Naive thymus-derived CD4-positive, alpha-beta T cell (primary cell): ENCODE measurements at regions of chr1 and their contacts with region 1.

Region 1: GRCh38 chr1:154404984-154405761 is at the start of gene IL6R:
- DNase-seq: peak; percentile 63 to 83 (median 77)
- ATAC-seq: peak; percentile 70
- H3K4me3 ChIP-seq: peak within 1 kb of the TSS; percentile 72
- H3K4me3 Mint-ChIP-seq: peak within 1 kb of the TSS; percentile 88 to 98 (median 96)
- H3K27ac ChIP-seq: peak within 1 kb of the TSS; percentile 75
- H3K27ac Mint-ChIP-seq: peak within 1 kb of the TSS; percentile 77 to 99 (median 95)
- H3K4me1 ChIP-seq: peaks cover 51 to 68% of the 10 kb centered on the region in 2 donors
- H3K4me1 Mint-ChIP-seq: peaks cover 50 to 75% (median 68%) of the 10 kb centered on the region in 7 donors
- H3K27me3 ChIP-seq: no peaks in the 10 kb centered on the region
- H3K27me3 Mint-ChIP-seq: peaks cover 0 to 4% (median 0%) of the 10 kb centered on the region in 5 donors
- total RNA-seq, gene IL6R: 5.2 to 91.6 (median 85.6) TPM

Region 2: DNA sequence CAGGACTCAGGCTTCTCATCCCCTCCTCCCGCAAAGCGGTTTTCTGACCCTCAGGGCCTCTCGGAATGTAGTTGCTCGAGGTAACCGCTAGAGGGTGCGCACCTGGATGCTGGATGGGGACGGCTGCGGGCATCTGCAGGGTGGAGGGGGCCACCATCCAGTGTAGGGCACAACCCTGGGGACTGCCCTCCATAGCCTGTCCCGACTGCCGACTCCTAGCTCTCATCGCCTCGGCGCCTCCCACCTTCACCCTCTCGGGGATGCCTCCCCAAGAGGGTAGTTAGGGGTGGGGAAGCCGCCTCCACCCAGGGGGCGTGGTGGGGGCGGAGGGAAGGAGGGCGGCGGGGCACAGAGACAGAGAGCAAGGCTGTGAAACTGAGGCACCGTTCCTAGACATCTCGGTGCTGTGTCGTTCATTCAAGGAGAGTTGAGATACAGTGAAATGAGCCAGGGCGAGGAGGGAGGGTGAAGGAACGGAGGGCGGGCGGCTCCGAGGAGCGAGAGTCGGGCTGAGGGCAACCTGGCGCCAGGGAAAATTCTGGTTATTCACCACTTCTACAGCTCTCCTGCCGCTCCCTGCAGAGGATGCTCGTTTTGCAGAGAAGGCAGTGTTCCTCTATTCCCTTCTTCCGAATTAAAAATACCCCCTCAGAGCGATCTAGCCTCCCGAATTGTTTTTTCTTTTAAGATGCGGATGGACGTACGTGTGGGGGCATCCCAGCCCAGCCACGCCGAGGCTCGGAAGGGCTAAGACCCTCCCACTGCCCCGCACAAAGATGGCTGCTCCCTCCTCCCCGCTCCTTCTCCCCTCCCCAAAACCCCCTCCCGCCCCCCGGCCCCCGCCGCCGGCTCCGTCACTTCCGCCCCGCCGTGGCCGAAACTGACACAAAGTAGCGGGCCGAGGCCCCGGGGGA is 80.2 kb before region 1 on chr1 and contains the start of gene ATP8B2:
- CTCF ChIA-PET with region 1: interaction called, 8 read pairs
- POLR2A ChIA-PET with region 1: interaction called, 6 read pairs
- intact Hi-C with region 1: loop called in 1 of 2 experiments (anchors 1 kb)
- DNase-seq: peak; percentile 60 to 82 (median 77)
- ATAC-seq: peak; percentile 80
- H3K4me3 ChIP-seq: peak within 1 kb of the TSS; percentile 79
- H3K4me3 Mint-ChIP-seq: peak within 1 kb of the TSS; percentile 92 to 98 (median 96)
- H3K27ac ChIP-seq: peak within 1 kb of the TSS; percentile 94
- H3K27ac Mint-ChIP-seq: peak within 1 kb of the TSS; percentile 80 to 95 (median 92)
- H3K4me1 ChIP-seq: peaks cover 24 to 36% of the 10 kb centered on the region in 2 donors
- H3K4me1 Mint-ChIP-seq: peaks cover 27 to 42% (median 38%) of the 10 kb centered on the region in 7 donors
- H3K27me3 ChIP-seq: no peaks in the 10 kb centered on the region
- H3K27me3 Mint-ChIP-seq: peaks cover 0 to 31% (median 0%) of the 10 kb centered on the region in 5 donors
- total RNA-seq, gene ATP8B2: 105 to 130 (median 117) TPM

Region 3: DNA sequence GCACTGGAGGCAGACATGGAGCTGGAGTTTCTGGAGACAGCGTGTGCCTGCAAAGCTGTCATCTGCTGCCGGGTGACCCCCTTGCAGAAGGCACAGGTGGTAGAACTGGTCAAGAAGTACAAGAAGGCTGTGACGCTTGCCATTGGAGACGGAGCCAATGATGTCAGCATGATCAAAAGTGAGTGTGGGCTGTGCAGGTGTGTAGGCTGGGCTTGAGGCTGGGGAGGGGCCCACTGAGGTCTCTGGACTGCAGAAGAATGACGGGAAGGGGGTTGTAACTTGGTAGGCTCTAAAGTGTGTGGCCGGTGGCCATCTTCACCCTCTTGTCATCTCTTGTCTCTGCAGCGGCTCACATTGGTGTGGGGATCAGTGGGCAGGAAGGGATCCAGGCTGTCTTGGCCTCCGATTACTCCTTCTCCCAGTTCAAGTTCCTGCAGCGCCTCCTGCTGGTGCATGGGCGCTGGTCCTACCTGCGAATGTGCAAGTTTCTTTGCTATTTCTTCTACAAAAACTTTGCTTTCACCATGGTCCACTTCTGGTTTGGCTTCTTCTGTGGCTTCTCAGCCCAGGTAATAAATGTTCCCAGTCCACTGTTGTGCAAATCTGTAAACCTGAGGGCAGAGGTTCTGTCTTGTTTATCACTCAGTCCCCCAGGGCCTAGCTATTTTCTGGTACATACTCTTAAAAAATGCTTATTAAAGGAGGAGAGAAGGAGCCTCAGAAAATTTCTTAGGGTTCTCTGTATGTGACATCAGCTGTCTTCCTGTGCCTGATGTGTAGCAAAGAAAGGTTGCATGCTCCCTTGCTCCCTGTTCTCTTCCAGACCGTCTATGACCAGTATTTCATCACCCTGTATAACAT is 60.0 kb before region 1 on chr1:
- CTCF ChIA-PET with region 1: interaction called, 18 read pairs
- POLR2A ChIA-PET with region 1: interaction called, 26 read pairs
- intact Hi-C with region 1: loop called in 1 of 2 experiments (anchors 5 kb)
- DNase-seq: peak; percentile 56 to 79 (median 71)
- ATAC-seq: peak; percentile 55
- H3K4me3 ChIP-seq: peak overlapping the region; percentile 83
- H3K4me3 Mint-ChIP-seq: peak overlapping the region; percentile 79 to 98 (median 92)
- H3K27ac ChIP-seq: peak overlapping the region; percentile 61
- H3K27ac Mint-ChIP-seq: peak overlapping the region; percentile 31 to 100 (median 96)
- H3K4me1 ChIP-seq: peaks cover 60 to 71% of the 10 kb centered on the region in 2 donors
- H3K4me1 Mint-ChIP-seq: peaks cover 64 to 96% (median 73%) of the 10 kb centered on the region in 7 donors
- H3K27me3 ChIP-seq: no peaks in the 10 kb centered on the region
- H3K27me3 Mint-ChIP-seq: no peaks in the 10 kb centered on the region

Region 4: GRCh38 chr1:154386643-154387352 is 18.4 kb before region 1 on chr1:
- CTCF ChIA-PET with region 1: interaction called, 18 read pairs
- POLR2A ChIA-PET with region 1: interaction called, 43 read pairs
- intact Hi-C with region 1: loop called (anchors 1 to 2 kb)
- DNase-seq: peak; percentile 21 to 81 (median 66)
- ATAC-seq: peak; percentile 95
- H3K4me3 ChIP-seq: peak overlapping the region; percentile 57
- H3K4me3 Mint-ChIP-seq: peak overlapping the region; percentile 65 to 92 (median 83)
- H3K27ac ChIP-seq: peak overlapping the region; percentile 82
- H3K27ac Mint-ChIP-seq: peak overlapping the region; percentile 92 to 99 (median 97)
- H3K4me1 ChIP-seq: peaks cover 26 to 38% of the 10 kb centered on the region in 2 donors
- H3K4me1 Mint-ChIP-seq: peaks cover 28 to 63% (median 43%) of the 10 kb centered on the region in 7 donors
- H3K27me3 ChIP-seq: no peaks in the 10 kb centered on the region
- H3K27me3 Mint-ChIP-seq: no peaks in the 10 kb centered on the region

Region 5: GRCh38 chr1:154442006-154442740 is 37.0 kb after region 1 on chr1:
- CTCF ChIA-PET with region 1: interaction called, 29 read pairs
- POLR2A ChIA-PET with region 1: interaction called, 71 read pairs
- intact Hi-C with region 1: loop called (anchors 1 to 2 kb)
- DNase-seq: no peak
- ATAC-seq: no peak
- H3K4me3 ChIP-seq: peak overlapping the region; percentile 36
- H3K4me3 Mint-ChIP-seq: peak overlapping the region in 9 of 10 donors; percentile 69 to 87 (median 76)
- H3K27ac ChIP-seq: peak overlapping the region; percentile 78
- H3K27ac Mint-ChIP-seq: peak overlapping the region in 8 of 9 donors; percentile 91 to 99 (median 96)
- H3K4me1 ChIP-seq: peaks cover 11 to 69% of the 10 kb centered on the region in 2 donors
- H3K4me1 Mint-ChIP-seq: peaks cover 55 to 82% (median 73%) of the 10 kb centered on the region in 7 donors
- H3K27me3 ChIP-seq: no peaks in the 10 kb centered on the region
- H3K27me3 Mint-ChIP-seq: no peaks in the 10 kb centered on the region

Region 6: GRCh38 chr1:154546264-154547063 is 141.3 kb after region 1 on chr1:
- CTCF ChIA-PET with region 1: interaction called, 4 read pairs
- POLR2A ChIA-PET with region 1: interaction called, 3 read pairs
- intact Hi-C with region 1: loop called in 1 of 2 experiments (anchors 2 kb)
- DNase-seq: peak; percentile 18 to 56 (median 42)
- ATAC-seq: peak; percentile 89
- H3K4me3 ChIP-seq: no peak overlapping the region
- H3K4me3 Mint-ChIP-seq: no peak overlapping the region
- H3K27ac ChIP-seq: no peak overlapping the region
- H3K27ac Mint-ChIP-seq: peak overlapping the region in 5 of 9 donors; percentile 14 to 57 (median 21)
- H3K4me1 ChIP-seq: no peaks in the 10 kb centered on the region
- H3K4me1 Mint-ChIP-seq: peaks cover 2 to 28% (median 15%) of the 10 kb centered on the region in 7 donors
- H3K27me3 ChIP-seq: no peaks in the 10 kb centered on the region
- H3K27me3 Mint-ChIP-seq: peaks cover 0 to 10% (median 0%) of the 10 kb centered on the region in 5 donors